H1 (cell line): ENCODE measurements at regions of chr1 and their contacts with region 1.

Region 1: DNA sequence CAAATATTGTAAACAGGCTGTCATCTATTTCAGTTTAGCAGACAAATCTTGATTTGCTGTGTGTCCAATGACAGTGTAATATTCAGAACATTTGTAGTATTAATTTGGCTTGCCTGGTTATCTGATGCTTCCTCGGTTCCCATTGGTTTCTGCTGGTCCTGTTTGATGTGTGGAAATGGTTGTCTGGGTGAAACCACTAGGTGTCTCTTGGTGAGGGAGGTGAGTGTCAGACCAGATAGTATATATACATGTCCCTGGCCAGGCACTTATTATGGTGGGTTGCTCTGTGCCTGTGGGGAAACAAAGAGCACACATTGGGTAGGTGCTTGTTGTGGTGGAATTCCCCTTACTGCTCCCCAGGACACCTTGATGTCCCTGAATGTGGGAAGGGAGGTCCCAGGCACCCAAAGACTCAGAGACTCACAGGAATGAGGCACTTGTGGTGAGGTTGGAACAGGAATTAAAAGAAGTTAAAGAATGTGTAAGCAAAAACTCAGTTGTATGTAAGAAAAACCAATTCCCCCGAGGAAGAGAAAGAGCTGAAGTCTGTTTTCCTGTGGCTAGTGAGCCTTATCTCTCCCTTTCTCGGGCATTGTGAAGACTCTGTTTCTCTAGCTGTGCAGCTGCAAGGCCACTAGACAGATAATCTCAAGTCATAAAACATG is 1519.1 kb downstream of the BRINP3 start:
- DNase-seq: no peak
- H3K4me3 ChIP-seq: no peak overlapping the region
- H3K27ac ChIP-seq: no peak overlapping the region
- H3K4me1 ChIP-seq: peaks cover 0 to 4% (median 2%) of the 10 kb centered on the region in 4 experiments; a peak in 2 of 7 replicates
- H3K27me3 ChIP-seq: no peaks in the 10 kb centered on the region
- CTCF ChIP-seq: no peak
- EP300 ChIP-seq: no peak
- POLR2A ChIP-seq: no peak
- RAD21 ChIP-seq: peak in 1 of 2 experiments; percentile 22; a peak in 1 of 4 replicates

Region 2: GRCh38 chr1:188615321-188615720 is 343.3 kb before region 1 on chr1:
- CTCF ChIA-PET with region 1: no interaction called
- POLR2A ChIA-PET with region 1: no interaction called
- DNase-seq: no peak
- H3K4me3 ChIP-seq: no peak overlapping the region
- H3K27ac ChIP-seq: no peak overlapping the region
- H3K4me1 ChIP-seq: no peaks in the 10 kb centered on the region
- H3K27me3 ChIP-seq: no peaks in the 10 kb centered on the region
- CTCF ChIP-seq: no peak
- EP300 ChIP-seq: no peak
- POLR2A ChIP-seq: no peak
- RAD21 ChIP-seq: no peak

Region 3: DNA sequence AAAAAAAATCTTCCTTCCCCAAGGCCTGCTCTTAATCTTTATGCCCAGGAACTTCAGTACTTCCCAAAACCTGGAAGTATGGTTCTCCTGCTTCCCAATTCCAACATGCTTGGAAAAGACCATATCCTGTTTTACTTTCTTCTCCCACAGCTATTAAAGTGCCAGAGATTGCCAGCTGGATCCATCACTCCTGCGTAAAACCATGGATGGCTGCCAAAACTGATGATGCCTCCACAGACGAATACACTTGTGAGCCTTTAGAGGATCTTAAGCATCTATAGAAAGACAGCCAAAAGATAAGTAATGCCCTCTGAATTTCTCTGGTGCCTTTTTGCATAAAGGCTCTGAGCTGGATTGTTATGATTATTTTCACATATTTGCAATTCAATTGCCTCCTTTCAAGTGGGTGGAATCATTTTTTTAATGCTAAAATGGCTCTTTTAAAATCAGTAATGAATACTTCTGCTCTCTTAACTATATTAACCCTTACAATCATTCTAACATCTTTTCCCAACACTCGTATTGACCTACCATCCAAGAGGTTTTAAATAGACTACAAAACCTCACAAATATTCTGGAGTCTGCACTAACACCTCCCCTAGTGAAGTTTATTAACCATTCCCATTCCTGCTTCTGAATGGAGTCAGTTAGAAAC is 288.7 kb before region 1 on chr1:
- CTCF ChIA-PET with region 1: no interaction called
- POLR2A ChIA-PET with region 1: no interaction called
- DNase-seq: no peak
- H3K4me3 ChIP-seq: no peak overlapping the region
- H3K27ac ChIP-seq: no peak overlapping the region
- H3K4me1 ChIP-seq: peaks cover 0 to 6% (median 0%) of the 10 kb centered on the region in 4 experiments; a peak in 2 of 7 replicates
- H3K27me3 ChIP-seq: no peaks in the 10 kb centered on the region
- CTCF ChIP-seq: no peak
- EP300 ChIP-seq: no peak
- POLR2A ChIP-seq: no peak
- RAD21 ChIP-seq: no peak

Region 4: GRCh38 chr1:188937965-188938551 is 20.5 kb before region 1 on chr1:
- CTCF ChIA-PET with region 1: interaction called, 10 read pairs
- POLR2A ChIA-PET with region 1: no interaction called
- DNase-seq: no peak
- H3K4me3 ChIP-seq: no peak overlapping the region
- H3K27ac ChIP-seq: no peak overlapping the region
- H3K4me1 ChIP-seq: peaks cover 0 to 4% (median 0%) of the 10 kb centered on the region in 4 experiments; a peak in 1 of 7 replicates
- H3K27me3 ChIP-seq: no peaks in the 10 kb centered on the region
- CTCF ChIP-seq: peak in 2 of 3 experiments; percentile 47; a peak in 3 of 4 replicates
- EP300 ChIP-seq: no peak
- POLR2A ChIP-seq: no peak
- RAD21 ChIP-seq: peak; percentile 46 to 66